HEK293 (cell line): ENCODE measurements at regions of chr16 and their contacts with region 1.

Region 1: DNA sequence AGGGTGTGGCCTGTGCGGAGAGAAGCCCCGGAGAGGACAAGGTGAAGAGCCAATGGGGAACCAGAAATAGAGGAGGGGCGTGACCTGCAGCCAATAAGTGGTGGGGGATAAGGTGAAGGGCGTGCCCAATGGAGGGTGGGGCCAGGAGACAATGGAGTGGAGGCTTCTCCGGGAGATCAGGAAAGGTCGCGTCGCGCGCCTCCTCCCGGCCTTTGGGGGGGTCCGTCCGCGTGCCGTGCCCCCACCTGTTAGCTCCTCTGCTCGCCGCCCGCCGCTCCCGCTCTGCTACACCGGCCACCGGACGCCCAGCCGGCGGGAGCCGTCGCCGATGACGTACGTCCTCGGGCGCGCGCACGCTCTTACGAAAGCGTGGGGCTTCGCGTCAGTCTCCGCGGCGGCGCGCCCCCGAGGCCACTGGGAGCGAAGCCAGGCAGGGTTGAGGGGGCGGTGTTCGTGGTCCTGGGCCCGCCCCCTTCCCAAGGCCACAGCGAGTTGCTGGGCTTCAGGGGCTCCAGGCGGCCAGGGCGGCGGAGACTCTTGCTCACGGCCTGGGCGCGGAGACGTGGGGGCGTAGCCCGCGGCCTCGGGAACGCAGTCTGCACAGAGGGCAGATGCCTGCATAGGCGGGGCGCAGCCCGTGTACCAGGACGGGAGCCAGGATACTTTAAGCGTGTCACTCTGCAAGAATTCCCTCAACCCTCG is at the start of gene MATCAP1:
- H3K4me3 ChIP-seq: peak within 1 kb of the TSS; percentile 84
- H3K27ac ChIP-seq: peak within 1 kb of the TSS; percentile 88
- H3K4me1 ChIP-seq: peaks cover 9% of the 10 kb centered on the region
- CTCF ChIP-seq: 0 out of 2 replicates have a peak, but pooled peaks have one; percentile 38

Region 2: GRCh38 chr16:66977341-66978113 is 206.3 kb before region 1 on chr16:
- CTCF ChIA-PET with region 1: interaction called, 21 read pairs
- POLR2A ChIA-PET with region 1: interaction called, 7 read pairs
- H3K4me3 ChIP-seq: no peak overlapping the region
- H3K27ac ChIP-seq: no peak overlapping the region
- H3K4me1 ChIP-seq: no peaks in the 10 kb centered on the region
- CTCF ChIP-seq: peak; percentile 98

Region 3: DNA sequence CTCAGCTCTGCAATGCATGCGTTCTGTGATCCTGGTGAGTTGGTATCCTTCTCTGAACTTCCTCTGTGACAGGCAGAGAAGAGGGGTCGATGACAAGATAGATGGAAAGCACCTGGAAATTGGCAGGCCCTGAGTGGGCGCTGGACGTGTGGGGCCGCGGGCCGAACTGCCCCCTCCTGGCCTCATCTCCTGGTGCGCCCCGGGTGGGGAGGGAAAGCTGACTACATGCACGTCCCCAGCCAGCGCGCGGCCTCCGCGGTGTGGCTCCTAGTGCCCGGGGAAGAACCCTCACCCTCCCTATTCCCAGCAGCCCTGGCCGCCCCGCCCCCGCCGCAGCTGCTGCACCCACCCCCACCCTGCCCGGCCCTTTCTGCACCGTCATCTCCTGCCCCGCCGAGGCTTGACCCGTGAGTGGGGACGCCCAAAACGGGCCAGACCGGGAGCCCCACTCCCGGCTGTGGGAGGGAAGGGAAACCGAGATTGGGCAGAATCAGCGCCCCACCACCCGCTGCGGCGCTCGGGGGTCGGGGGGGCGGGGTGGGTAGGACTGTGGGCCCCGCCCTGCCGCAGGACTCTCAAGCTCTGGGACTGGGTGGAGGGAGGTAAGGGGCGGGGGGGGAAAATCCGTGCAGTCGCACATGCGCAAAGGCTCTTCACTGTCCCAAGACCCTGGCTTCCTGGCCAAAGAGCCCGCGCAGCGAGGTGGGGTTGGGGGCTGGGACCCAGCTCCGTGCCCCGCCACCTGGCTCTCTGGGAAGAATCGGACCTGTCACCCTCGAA is 13.4 kb before region 1 on chr16 and contains the start of gene NOL3:
- CTCF ChIA-PET with region 1: interaction called, 11 read pairs
- POLR2A ChIA-PET with region 1: no interaction called
- H3K4me3 ChIP-seq: peak within 1 kb of the TSS; percentile 36
- H3K27ac ChIP-seq: peak within 1 kb of the TSS; percentile 59; the same call in 1 of the 2 replicates
- H3K4me1 ChIP-seq: peaks cover 9% of the 10 kb centered on the region
- CTCF ChIP-seq: peak; percentile 43; the same call in 1 of the 2 replicates

Region 4: DNA sequence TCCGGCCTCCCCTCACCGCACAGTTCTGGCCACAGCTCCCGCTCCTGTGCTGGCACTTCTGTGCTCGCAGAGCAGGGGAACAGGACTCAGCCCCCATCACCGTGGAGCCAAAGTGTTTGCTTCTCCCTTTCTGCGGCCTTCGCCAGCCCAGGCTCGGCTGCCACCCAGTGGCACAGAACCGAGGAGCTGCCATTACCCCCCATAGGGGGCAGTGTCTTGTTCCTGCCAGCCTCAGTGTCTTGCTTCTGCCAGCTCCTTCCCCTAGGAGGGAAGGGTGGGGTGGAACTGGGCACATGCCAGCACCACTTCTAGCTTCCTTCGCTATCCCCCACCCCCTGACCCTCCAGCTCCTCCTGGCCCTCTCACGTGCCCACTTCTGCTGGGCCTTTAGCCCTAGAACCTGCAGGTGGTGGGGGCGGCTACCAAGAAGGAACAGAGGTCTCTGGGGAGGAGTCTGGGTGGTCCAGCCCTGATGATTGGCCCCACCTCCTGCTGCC is 14.5 kb after region 1 on chr16:
- CTCF ChIA-PET with region 1: interaction called, 10 read pairs
- POLR2A ChIA-PET with region 1: interaction called, 3 read pairs
- H3K4me3 ChIP-seq: no peak overlapping the region
- H3K27ac ChIP-seq: no peak overlapping the region
- H3K4me1 ChIP-seq: peaks cover 3% of the 10 kb centered on the region
- CTCF ChIP-seq: peak; percentile 98

Region 5: GRCh38 chr16:67241008-67241900 is 57.5 kb after region 1 on chr16:
- CTCF ChIA-PET with region 1: no interaction called
- POLR2A ChIA-PET with region 1: no interaction called
- H3K4me3 ChIP-seq: no peak overlapping the region
- H3K27ac ChIP-seq: no peak overlapping the region
- H3K4me1 ChIP-seq: peaks cover 4% of the 10 kb centered on the region; the same call in 1 of the 2 replicates
- CTCF ChIP-seq: no peak

Region 6: DNA sequence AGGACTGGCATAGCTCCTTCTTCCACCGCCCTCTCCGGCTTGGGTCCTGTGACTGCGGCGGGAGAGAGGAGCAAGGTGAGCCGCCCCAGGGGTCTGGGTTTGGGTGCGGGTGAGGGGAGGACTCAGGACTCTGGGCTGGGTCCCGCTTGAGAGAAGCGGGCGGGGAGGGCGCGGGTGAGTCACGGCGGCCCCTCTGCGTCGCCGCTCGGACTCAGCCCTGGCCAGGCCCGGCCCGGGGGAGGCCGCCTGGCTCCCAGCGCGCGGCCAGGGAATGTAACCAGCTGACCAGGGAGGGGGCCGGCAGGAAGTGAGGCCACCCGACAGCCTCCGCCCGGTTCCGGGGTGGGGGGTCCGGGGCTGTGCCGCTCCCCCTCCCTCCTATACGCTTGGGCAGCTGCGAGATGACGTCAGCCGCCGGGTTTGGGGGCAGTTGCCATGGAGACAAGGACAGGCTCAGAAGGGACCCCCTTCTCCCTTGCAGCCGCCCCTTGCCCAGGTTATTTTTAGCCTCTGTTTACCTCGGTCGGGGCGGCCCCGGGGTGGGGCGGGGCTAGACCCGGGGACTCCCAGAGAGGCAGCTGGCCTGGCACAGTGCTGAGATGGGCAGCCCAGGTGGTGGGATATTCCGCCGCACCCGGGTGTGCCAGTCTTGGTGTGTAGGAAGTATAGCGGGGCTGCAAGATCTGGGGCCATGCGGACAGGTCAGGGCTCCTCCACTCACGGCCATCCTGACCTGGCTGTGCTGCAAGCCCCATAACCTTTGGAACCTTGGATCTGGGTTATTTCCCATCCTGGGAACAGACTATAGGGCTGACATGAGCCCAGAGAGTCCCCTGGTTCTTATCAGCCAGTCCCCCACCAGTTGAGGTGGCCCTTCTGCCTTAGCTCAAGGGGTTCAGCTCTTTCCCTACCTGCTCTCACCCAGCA is 346.5 kb after region 1 on chr16:
- CTCF ChIA-PET with region 1: no interaction called
- POLR2A ChIA-PET with region 1: no interaction called
- H3K4me3 ChIP-seq: peak overlapping the region; percentile 56
- H3K27ac ChIP-seq: no peak overlapping the region; the same call in 1 of the 2 replicates
- H3K4me1 ChIP-seq: no peaks in the 10 kb centered on the region
- CTCF ChIP-seq: no peak